Activated naive CD4-positive, alpha-beta T cell treated with anti-CD3 and anti-CD28 coated beads, Interleukin-2, amount 10 ng/mL, durations not matched to agents 7 days and 5 days (primary cell): ENCODE measurements at regions of chr4 and their contacts with region 1.

Region 1: DNA sequence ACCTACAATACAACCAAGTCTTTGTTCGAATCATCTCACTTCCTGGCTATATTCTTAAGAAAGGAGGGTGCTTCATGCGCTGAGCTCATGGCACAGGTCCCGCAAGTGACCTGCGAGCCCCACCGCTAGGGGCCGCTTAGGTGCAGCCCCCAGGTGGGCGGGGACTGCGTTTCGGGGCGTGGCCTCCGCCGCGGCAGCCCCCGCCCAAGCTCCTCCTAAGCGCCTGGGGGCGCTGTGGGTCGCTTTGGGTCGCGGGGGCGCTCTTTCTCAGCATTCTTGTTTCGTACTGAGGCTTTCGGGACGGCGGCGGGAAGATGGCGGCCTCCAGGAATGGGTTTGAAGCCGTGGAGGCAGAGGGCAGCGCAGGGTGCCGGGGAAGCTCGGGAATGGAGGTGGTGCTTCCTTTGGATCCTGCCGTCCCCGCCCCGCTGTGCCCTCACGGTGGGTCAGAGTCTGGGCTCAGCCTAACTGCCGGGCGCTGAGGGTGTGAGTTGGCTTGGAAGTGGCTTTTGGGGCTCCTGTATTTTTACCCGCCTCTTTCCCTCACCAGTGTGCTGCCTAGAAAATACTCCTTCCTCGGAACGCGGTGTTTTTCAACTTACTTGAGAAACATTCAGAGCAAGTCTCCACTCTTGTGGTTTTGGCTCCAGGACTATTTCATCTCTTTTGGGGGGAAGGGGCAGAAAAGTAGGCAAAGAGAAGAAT is at the start of gene ZCCHC4:
- DNase-seq: peak; percentile 89
- H3K4me3 Mint-ChIP-seq: peak within 1 kb of the TSS; percentile 98
- H3K27ac Mint-ChIP-seq: peak within 1 kb of the TSS; percentile 92
- H3K4me1 Mint-ChIP-seq: peaks cover 32% of the 10 kb centered on the region
- H3K27me3 Mint-ChIP-seq: peaks cover 19% of the 10 kb centered on the region

Region 2: DNA sequence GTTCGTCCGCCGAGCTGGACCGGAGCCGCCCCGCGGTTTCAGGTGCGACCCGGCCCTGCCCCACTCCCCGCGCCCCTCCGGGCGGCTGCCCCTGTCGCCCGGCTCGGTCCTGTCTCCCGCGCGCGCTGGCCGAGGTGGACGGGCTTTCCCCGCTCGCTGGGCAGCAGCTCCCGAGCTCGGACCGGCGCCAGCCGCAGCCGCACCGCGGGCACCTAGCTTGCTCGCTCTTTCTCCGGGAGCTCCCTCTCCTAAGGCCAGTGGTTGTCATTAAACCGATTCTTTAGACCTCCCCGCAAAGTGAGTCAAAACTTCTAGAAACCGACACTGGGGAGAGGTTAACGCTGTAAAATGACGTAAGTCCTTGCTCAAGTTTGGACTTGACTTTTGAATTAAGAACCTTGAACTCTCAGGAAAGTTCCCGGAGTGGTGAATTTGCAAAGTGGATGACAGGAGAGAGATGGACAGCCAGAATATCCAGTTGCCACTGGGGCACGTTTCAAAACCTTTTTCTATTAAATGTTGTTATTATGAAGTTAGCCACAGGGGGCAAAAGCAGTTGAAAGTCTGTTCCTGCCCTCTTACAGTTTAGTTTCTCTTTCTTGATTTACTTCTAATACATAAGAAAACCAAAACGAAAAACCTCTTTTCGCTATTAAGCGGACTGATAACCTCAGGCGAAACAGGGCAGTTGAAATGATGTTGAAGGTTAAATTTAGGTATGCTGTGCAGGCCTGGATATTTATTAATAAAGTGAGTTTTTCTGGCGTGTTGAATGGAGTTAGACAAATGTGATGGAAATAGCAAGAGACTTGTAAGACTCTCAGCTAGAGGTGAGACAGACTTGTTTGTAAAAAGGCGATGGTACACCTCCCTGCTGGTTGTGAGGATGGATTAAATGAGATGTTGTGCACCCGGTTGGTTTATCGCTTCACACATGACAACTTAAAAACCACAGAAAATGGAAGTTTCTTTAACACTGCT is 78.0 kb before region 1 on chr4:
- CTCF ChIA-PET with region 1: interaction called, 13 read pairs
- DNase-seq: peak; percentile 41
- H3K4me3 Mint-ChIP-seq: peak overlapping the region; percentile 85
- H3K27ac Mint-ChIP-seq: peak overlapping the region; percentile 94
- H3K4me1 Mint-ChIP-seq: peaks cover 43% of the 10 kb centered on the region
- H3K27me3 Mint-ChIP-seq: no peaks in the 10 kb centered on the region

Region 3: GRCh38 chr4:25330905-25331808 is 18.5 kb after region 1 on chr4:
- CTCF ChIA-PET with region 1: interaction called, 22 read pairs
- DNase-seq: peak; percentile 23
- H3K4me3 Mint-ChIP-seq: peak overlapping the region; percentile 70
- H3K27ac Mint-ChIP-seq: peak overlapping the region; percentile 92
- H3K4me1 Mint-ChIP-seq: peaks cover 17% of the 10 kb centered on the region
- H3K27me3 Mint-ChIP-seq: no peaks in the 10 kb centered on the region

Region 4: DNA sequence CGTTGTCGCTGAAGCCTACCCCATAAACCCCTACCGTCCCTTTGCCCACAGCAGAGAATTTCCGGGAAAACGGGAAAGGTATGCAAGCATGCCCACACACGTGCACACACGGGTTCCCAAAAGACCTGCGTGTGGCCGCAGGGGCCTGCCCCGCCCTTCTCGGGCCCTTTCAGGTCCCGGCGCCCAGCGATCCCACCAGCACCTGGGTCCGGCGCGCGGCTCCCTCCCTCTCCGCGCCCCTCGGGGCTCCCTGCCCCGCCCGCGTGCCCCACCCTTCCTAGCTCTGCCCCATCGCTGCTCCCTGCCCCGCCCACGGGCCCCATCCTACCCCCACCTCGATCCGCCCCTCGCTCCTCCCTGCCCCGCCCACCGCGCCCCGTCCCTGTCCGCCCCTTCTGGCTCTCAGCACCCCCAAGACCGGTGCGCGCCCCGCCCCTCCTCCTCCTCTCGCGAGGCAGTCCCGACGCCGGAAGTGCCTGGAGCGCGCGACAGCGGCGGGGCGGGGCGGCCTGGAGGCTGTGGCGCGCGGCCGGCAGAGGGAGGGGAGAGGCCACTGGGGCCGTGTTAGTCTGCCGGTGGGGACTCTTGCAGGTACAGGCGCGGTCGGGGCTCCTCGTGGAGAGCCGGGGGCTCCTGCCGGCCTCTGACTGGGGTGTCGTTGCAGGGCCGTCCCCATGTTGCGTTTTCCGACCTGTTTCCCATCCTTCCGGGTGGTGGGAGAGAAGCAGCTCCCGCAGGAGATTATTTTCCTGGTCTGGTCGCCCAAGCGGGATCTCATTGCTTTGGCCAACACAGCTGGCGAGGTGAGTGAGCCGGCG is 64.3 kb after region 1 on chr4 and contains the start of gene ANAPC4:
- CTCF ChIA-PET with region 1: interaction called, 10 read pairs
- DNase-seq: peak; percentile 99
- H3K4me3 Mint-ChIP-seq: no peak within 1 kb of the TSS
- H3K27ac Mint-ChIP-seq: peak within 1 kb of the TSS; percentile 92
- H3K4me1 Mint-ChIP-seq: peaks cover 18% of the 10 kb centered on the region
- H3K27me3 Mint-ChIP-seq: no peaks in the 10 kb centered on the region